AG04449 (cell line): ENCODE measurements at regions of chr12 and their contacts with region 1.

Region 1: DNA sequence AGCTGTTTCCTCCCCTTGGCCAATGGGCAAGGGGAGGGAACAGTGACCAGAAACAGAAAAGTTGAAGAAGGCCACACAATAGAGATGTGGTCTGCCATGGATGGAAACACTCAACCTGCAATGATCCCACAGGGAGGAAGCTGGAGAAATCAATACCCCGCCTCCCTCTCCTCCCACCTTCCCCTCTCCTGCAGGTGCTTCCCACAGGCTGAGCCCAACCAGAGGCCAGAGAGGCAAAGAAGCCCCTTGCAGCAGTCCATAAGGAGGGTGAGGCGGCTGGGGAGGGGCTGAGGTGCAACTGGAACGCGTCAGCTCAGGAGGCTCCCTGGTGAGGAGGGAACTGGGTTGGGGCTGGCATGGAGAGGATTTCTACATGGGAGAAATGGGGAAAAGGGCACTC is 84.0 kb downstream of the RNF34 start:
- DNase-seq: no peak
- H3K4me3 ChIP-seq: no peak overlapping the region
- CTCF ChIP-seq: no peak

Region 2: GRCh38 chr12:121467115-121467793 is 16.7 kb before region 1 on chr12:
- CTCF ChIA-PET with region 1: interaction called, 17 read pairs
- POLR2A ChIA-PET with region 1: no interaction called
- DNase-seq: no peak
- H3K4me3 ChIP-seq: peak overlapping the region; percentile 61
- CTCF ChIP-seq: no peak

Region 3: DNA sequence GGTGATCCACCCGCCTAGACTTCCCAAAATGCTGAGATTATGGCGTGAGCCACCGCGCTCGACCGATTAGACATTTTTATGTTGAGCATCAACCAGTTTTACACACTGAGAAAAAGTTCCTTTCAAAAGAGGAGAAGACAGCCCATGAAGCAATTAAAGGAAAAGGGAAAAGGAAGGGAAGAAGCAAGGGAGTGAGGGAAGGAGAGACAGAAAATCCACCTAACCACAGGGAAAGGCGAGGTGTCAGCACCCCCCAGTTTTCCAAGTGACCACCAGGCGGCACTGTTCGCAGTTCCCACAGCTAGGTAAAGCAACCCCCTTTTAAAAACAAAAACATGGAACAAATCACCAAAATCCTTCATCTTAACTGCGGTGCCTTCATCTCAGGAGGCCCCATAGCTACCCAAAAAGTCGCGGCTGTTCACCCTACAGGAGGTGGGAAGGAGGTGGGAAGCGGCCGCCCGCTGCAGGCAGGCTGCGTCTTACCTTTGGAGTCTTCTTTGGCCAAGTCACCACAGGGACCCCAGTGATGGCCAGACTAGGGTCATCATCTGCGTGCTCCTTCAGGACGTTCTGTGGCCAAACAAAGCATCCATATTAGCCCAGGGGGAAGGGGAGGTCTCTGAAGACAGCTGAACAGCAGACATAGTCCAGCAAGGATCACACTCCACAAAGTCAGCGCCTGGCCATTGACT is 10.3 kb after region 1 on chr12:
- CTCF ChIA-PET with region 1: interaction called, 146 read pairs
- POLR2A ChIA-PET with region 1: no interaction called
- DNase-seq: no peak
- H3K4me3 ChIP-seq: no peak overlapping the region
- CTCF ChIP-seq: peak; percentile 82

Region 4: DNA sequence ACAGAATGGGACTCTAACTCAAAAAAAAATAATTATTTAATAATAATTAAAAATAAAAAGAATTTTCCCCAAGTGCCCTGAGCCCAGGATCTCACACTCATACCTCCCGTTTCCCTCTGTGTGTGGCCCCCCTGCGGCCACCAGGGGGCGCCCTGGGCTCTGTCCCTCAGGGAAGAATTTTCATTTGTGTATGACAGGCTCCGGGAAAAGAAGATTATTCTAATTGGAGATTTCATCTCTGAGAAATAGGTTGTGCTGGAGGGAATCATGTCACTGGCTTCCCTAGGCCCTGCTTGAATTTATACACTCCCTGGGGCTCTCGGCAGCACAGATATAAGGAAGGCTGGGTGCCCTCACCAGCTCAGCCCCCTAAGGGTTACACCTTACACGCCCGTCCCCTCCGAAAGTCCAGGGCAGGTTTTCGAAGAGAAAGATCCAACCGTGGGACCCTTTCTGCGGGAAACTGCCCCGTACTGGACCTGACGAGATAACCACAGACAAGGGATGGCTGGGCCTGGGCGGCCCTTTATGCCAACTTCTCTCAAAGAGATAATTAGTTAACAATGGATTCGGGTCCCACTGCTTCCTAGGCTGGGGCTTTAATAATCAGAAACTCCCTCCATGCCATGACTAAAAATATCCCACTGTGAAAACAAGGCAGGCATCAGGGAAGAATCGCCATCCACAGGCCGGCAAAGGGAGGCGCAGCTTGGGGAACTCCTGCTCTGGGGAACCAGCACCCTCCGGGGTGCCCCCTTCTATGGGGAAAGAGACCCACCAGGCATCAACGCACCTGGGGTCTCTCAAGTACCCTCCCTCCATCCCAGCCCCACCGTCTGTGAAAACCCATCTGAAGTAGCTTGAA is 16.2 kb after region 1 on chr12:
- CTCF ChIA-PET with region 1: interaction called, 146 read pairs
- POLR2A ChIA-PET with region 1: no interaction called
- DNase-seq: no peak
- H3K4me3 ChIP-seq: no peak overlapping the region
- CTCF ChIP-seq: peak; percentile 89

Region 5: DNA sequence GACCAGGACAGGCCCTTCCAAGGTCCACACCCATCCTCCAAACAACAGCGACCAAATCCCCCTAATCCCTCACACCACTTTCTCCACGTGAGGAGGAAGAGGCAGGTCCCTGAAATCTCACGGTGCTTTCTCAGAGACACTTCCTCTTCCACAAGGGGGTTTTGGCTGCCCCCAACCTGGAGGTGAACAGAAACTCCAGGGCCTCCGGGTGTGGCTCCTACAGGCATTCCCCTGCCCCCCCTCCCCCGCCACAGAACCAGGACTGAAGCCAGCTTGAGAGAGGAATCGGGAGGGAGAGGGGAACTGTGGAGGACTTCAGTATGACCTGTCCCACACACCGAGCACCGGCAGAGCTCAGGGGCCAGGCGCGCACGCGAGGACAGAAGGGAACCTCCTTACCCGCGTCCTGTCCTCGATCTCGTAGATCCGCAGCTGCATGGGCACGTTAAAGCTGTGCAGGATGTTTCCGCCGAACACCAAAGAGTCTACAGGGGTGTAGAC is 36.7 kb after region 1 on chr12:
- CTCF ChIA-PET with region 1: no interaction called
- POLR2A ChIA-PET with region 1: no interaction called
- DNase-seq: no peak
- H3K4me3 ChIP-seq: no peak overlapping the region
- CTCF ChIP-seq: no peak

Region 6: GRCh38 chr12:121600702-121601336 is 116.9 kb after region 1 on chr12:
- CTCF ChIA-PET with region 1: no interaction called
- POLR2A ChIA-PET with region 1: no interaction called
- DNase-seq: no peak
- H3K4me3 ChIP-seq: no peak overlapping the region
- CTCF ChIP-seq: no peak